T-cell (primary cell): ENCODE measurements at regions of chr5 and their contacts with region 1.

Region 1: DNA sequence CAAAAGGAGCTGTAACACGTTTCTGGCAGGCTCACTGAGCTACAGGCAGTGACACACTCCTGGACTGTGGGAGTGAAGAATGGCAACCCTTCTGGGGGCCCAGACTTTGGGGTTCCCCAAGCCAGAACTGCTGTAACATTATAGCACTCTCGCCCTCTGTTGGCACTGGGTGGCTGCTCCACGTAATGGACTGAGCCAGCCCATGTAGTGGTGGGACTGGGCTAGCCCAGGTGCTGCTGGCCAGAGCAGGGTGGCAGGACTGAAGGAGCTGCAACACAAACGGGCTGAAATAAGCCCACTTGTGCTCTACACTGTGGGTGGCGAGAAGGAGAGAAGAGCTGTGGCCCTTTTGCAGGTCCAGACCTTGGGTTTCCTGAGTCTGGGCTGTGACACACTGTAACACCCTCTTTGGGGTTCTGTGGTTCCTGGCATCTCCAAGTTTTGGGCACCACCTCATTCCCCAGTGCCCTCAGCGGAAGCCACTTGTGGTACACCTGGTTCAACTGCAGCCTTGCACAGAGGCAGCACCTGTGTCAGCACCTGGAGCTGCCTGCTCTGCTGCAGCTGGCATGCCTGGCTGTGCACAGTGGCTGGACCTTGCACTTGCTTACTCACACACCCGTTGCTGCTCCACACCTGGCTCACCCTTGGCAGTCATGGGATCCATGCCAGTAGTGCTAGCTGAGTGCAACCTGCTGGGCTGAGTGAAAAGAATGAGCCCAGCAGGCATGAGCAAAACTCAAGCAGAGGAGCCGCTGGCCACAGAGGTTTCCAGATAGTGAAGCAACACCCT is 95.0 kb upstream of the PRR16 start:
- DNase-seq: no peak
- ATAC-seq: no peak
- H3K4me3 ChIP-seq: no peak overlapping the region
- H3K4me3 Mint-ChIP-seq: no peak overlapping the region
- H3K27ac ChIP-seq: no peak overlapping the region
- H3K27ac Mint-ChIP-seq: no peak overlapping the region
- H3K4me1 ChIP-seq: no peaks in the 10 kb centered on the region
- H3K4me1 Mint-ChIP-seq: no peaks in the 10 kb centered on the region
- H3K27me3 ChIP-seq: no peaks in the 10 kb centered on the region
- H3K27me3 Mint-ChIP-seq: no peaks in the 10 kb centered on the region

Region 2: DNA sequence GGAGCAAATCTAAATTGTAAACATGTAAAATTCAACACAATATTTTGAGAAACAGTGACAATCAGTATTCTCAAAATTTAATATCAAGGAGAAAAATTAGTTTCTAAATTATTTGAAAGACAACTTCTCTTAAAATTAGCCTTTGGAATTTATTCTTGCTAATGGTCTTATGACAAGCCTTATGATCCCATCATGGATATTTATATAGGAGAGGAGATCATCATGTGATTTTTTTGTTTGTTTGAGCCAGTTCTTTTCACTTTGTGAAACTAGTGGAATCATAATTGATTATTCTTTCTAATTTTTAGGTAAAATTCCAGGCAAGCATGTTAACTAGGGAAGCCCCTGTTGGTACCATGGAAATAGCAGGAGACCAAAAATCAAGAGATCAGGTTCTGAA is 1273.5 kb before region 1 on chr5:
- CTCF ChIA-PET with region 1: no interaction called
- POLR2A ChIA-PET with region 1: interaction called in 1 of 2 experiments, 16 read pairs
- DNase-seq: no peak
- ATAC-seq: no peak
- H3K4me3 ChIP-seq: no peak overlapping the region
- H3K4me3 Mint-ChIP-seq: no peak overlapping the region
- H3K27ac ChIP-seq: no peak overlapping the region
- H3K27ac Mint-ChIP-seq: no peak overlapping the region
- H3K4me1 ChIP-seq: no peaks in the 10 kb centered on the region
- H3K4me1 Mint-ChIP-seq: peaks cover 22 to 24% (median 24%) of the 10 kb centered on the region in 3 donors
- H3K27me3 ChIP-seq: no peaks in the 10 kb centered on the region
- H3K27me3 Mint-ChIP-seq: no peaks in the 10 kb centered on the region

Region 3: DNA sequence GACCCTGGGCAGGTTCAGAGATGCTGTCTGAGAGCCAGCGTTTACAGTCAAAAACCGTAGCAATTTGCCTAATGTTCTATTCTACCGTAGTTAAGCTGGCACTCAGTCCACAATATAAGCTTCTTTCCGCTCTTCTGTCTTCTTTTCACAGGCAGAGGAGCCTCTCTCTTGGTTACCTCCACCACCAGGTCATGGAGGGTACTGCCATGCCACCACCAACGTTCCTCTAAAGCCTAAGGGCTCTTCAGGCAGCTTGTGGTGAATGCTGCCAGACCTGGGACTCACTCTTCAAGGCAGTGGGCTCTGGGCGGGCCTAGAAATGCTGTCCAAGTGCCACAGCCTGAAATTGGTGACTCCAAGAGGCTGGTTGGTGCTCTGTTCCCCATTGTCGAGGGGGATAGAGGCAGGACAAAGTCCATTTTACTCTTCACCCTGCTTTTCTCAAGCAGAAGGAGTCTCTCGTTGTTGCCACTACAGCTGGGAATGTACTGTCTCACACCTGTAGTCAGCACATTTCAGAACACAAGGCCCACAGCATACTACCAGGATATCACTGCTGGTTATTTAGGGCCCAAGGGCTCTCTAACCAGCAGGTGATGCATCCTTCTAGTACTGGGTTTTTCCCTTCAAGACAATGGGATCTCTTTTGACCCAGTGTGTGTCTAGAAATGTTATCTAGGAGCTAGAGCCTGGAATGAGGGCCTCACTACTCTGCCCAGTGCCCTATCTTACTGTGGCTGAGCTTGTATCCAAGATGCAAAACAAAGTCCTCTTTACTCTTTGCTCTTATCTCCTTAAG is 140.3 kb before region 1 on chr5:
- CTCF ChIA-PET with region 1: no interaction called
- POLR2A ChIA-PET with region 1: no interaction called
- DNase-seq: no peak
- ATAC-seq: no peak
- H3K4me3 ChIP-seq: no peak overlapping the region
- H3K4me3 Mint-ChIP-seq: no peak overlapping the region
- H3K27ac ChIP-seq: no peak overlapping the region
- H3K27ac Mint-ChIP-seq: no peak overlapping the region
- H3K4me1 ChIP-seq: no peaks in the 10 kb centered on the region
- H3K4me1 Mint-ChIP-seq: no peaks in the 10 kb centered on the region
- H3K27me3 ChIP-seq: no peaks in the 10 kb centered on the region
- H3K27me3 Mint-ChIP-seq: no peaks in the 10 kb centered on the region